Activated CD8-positive, alpha-beta T cell treated with anti-CD3 and anti-CD28 coated beads for 36 hours (primary cell): ENCODE measurements at regions of chr14 and their contacts with region 1.

Region 1: DNA sequence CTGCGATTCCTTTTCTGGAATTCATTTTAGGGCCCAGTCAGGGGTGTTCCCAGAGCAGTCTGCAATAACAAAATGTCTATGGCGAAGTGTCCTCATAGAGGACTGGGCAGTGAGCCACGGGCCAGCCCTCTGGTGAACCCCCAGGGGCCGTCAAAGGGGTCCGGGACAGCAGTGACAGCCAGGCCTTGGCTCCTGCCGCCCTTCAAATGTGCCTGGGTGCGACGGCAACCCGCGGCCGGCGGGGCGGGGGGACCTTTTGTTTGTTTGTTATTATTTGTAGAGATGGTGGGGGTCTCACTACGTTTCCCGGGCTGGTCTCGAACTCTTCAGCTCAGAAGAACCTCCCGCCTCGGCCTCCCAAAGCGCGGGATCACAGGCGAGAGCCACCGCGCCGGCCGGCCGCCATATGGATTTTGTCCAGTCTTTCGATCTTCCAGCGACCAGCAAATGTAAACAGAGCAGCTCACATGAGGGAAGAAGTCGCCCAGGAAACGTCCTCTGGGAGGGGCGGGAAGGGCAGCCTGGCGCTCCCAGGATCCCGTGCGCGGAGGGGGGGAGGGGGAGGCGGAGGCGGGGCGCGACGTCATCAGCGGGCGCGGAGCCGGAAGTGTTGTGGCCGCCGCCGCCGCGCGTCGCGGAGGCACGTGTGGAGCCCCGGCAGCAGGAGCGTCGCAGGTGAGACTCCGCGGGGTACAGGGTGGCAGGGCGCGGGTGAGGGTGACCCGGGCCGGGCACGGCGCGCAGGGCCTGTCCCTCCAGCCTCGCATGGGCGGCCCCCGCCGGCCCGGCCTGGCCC is at the start of gene TRMT61A:
- DNase-seq: peak; percentile 71
- ATAC-seq: peak; percentile 74
- H3K4me3 Mint-ChIP-seq: peak within 1 kb of the TSS; percentile 94
- H3K27ac Mint-ChIP-seq: peak within 1 kb of the TSS; percentile 95
- H3K4me1 Mint-ChIP-seq: peaks cover 34% of the 10 kb centered on the region
- H3K27me3 Mint-ChIP-seq: peaks cover 6% of the 10 kb centered on the region
- CTCF ChIP-seq: no peak
- total RNA-seq, gene TRMT61A: 9.9 TPM

Region 2: DNA sequence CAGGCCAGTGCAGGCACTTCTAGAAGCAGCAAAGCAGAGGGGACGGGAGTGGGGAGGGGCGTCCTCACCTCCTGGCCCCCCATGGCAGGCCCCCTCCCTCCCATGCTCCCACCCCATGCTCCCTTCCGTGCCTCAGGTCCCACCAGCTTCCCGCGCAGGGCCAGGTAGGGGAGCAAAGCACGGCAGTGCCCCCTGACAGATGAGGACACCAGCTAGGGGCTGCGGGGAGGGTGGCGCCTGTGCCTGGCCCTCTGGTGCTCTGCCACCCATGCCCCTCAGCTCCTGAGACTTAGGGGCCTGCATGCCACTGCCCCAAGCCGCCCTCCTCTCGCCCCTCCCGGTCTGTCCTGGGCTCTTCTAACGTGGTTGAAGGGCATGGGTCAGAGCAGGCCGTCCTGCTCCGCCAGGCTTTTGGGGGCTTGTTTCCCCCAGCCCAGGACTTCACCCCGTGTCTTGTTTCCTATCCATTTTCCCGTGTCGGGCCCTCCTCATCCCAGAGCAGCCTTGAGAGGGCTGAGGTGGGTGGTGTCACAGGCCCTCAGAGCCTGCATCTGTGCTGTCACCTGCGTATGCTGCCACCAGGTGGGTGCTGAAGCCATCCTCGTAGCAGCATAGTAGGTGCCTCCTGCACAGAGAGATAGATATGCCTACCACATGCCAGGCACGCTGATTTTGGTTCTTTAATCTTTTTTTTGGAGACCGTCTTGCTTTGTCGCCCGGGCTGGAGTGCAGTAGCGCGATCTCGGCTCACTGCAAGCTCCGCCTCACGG is 10.5 kb after region 1 on chr14:
- CTCF ChIA-PET with region 1: no interaction called
- POLR2A ChIA-PET with region 1: interaction called, 13 read pairs
- intact Hi-C with region 1: no loop called
- DNase-seq: no peak
- ATAC-seq: no peak
- H3K4me3 Mint-ChIP-seq: no peak overlapping the region
- H3K27ac Mint-ChIP-seq: no peak overlapping the region
- H3K4me1 Mint-ChIP-seq: no peaks in the 10 kb centered on the region
- H3K27me3 Mint-ChIP-seq: no peaks in the 10 kb centered on the region
- CTCF ChIP-seq: no peak

Region 3: GRCh38 chr14:103847451-103848188 is 318.8 kb after region 1 on chr14 and contains the start of gene PPP1R13B:
- CTCF ChIA-PET with region 1: no interaction called
- POLR2A ChIA-PET with region 1: no interaction called
- intact Hi-C with region 1: no loop called
- DNase-seq: peak; percentile 93
- ATAC-seq: peak; percentile 98
- H3K4me3 Mint-ChIP-seq: peak within 1 kb of the TSS; percentile 79
- H3K27ac Mint-ChIP-seq: peak within 1 kb of the TSS; percentile 55
- H3K4me1 Mint-ChIP-seq: peaks cover 13% of the 10 kb centered on the region
- H3K27me3 Mint-ChIP-seq: no peaks in the 10 kb centered on the region
- CTCF ChIP-seq: no peak
- total RNA-seq, gene PPP1R13B: 11.9 to 14.5 TPM